A549 (cell line): ENCODE measurements at regions of chr16 and their contacts with region 1.

Region 1: DNA sequence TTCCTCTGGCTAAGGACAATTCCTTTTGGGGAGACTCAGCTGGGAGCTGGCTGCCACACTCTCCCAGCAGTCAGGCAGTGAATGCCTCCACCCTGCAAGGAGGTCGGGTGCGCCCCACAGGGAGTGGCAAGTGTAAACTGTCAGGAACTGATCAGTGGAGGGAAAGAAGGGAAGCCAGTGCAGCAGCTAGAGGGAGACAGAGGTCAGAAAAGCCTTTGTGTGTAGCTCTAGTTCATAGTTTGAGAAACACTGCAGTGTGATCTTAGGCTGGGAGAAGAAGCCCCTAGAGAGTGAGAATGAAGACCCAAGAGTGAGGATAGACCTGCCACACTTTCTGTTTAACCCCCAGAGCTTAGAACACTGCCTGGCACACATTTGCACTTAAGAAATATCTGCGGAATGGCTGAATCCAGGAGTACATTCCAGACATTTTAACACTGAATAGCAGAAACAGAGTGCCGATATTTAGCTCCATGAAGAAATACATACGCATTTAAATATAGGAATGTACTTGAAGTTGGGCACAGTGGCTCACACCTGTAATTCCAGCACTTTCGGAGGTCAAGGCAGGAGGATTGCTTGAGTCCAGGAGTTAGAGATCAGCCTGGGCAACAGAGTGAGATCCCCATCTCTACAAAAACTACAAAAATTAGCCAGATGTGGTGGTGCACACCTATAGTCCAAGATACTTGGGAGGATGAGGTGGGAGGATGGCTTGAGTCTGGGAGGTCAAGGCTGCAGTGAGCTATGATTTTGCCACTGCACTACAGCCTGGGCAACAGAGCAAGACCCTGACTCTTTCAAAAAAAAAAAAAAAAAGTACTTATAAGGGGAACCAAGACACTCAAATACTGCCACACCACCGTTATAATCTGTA is 11.1 kb upstream of the SLC5A11 start:
- DNase-seq: peak; percentile 71 to 76
- ATAC-seq: peak; percentile 87
- H3K4me3 ChIP-seq: no peak overlapping the region
- H3K27ac ChIP-seq: peak overlapping the region; percentile 63 to 74
- H3K4me1 ChIP-seq: peaks cover 31% of the 10 kb centered on the region
- CTCF ChIP-seq: peak; percentile 90
- EP300 ChIP-seq: no peak
- POLR2A ChIP-seq: no peak
- RAD21 ChIP-seq: peak; percentile 92 to 96

Region 2: DNA sequence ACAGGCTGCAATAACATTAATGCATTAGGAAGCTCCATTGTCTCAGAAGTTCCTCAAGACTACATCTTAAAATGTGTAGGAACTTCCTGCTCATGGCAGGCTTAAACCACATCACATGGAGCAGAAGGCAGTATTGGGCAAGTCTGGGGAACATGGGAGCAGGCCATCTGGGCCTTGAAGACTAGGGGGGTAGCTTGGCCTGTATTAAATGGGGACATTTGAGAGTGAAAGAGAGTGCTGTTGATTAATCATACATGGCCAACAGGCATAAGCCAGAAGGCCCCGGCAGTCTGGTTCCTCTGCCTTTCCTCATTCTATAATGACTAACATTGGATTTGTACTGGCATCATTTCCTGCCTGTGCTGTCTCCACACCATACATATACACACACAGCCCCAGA is 14.2 kb before region 1 on chr16:
- CTCF ChIA-PET with region 1: interaction called, 11 read pairs
- POLR2A ChIA-PET with region 1: no interaction called
- DNase-seq: no peak
- ATAC-seq: no peak
- H3K4me3 ChIP-seq: no peak overlapping the region
- H3K27ac ChIP-seq: no peak overlapping the region
- H3K4me1 ChIP-seq: peaks cover 11% of the 10 kb centered on the region; the same call in 2 of the 3 replicates
- CTCF ChIP-seq: no peak
- EP300 ChIP-seq: no peak
- POLR2A ChIP-seq: no peak
- RAD21 ChIP-seq: no peak

Region 3: DNA sequence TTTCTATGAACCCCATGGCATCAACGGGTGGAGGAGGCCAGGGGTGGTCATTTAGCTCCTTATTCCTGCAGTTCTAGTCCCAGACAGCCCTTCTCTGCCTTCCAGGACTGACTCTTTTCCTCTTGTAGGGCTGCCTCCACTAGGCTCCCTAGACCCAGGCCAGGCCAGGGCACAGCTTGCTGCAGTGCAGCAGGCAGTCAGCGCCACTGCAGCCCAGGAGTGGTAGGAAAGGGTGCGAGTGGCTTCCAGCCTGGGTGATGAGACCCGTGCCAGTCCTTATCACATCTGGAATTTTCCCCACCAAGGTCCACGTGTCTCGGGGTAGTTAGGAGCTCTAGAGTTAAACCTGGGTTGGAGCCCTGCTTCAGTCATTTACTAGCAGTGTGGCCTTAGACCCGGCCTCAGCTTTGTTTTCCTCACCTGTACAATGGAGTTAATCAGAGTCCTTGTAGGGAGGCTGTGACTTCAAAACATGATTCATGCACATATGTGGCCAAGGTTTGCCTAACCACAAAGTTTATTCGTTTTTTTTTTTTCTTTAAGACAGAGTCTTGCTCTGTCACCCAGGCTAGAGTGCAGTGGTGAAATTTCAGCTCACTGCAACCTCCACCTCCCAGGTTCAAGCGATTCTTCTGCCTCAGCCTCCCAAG is 15.7 kb after region 1 on chr16:
- CTCF ChIA-PET with region 1: interaction called, 22 read pairs
- POLR2A ChIA-PET with region 1: interaction called, 11 read pairs
- DNase-seq: no peak
- ATAC-seq: peak; percentile 1 to 21; a peak in 1 of 6 replicates
- H3K4me3 ChIP-seq: no peak overlapping the region
- H3K27ac ChIP-seq: peak overlapping the region; percentile 83 to 89
- H3K4me1 ChIP-seq: peaks cover 93% of the 10 kb centered on the region
- CTCF ChIP-seq: no peak
- EP300 ChIP-seq: no peak
- POLR2A ChIP-seq: no peak
- RAD21 ChIP-seq: no peak

Region 4: DNA sequence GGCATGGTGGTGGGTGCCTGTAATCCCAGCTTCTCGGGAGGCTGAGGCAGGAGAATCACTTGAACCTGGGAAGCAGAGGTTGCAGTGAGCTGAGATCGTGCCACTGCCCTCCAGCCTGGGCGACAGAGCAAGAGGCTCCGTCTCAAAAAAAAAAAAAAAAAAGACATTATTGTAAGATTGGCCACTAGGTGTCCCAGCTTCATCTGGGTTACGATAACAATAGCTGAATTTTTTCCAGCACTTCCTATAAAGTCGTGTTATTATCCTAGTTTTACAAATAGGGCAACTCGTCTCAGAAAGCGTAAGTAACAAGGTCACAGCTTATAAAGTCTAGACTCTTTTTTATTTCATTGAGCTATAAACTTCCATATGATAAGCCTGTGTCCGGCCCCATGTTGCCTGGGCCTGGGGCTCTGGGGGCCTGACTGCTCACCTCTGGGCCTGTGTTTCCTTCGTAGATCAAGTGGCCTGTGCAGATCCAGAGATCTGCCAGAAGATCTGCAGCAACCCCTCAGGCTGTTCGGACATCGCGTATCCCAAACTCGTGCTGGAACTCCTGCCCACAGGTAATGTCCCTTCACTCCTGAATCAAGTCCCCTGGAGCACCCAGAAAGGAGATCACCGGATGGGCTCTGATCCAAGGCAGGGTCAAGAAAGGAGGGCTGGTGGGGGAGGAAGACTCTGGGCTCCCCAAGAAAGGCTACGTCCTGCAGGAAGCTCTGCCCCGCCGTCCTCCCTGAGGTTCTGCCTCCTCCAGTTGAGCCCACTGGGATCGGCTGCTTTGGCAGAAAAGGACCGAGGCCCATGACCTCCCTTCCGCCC is 71.7 kb after region 1 on chr16:
- CTCF ChIA-PET with region 1: interaction called, 11 read pairs
- POLR2A ChIA-PET with region 1: no interaction called
- DNase-seq: peak in 1 of 2 experiments; percentile 35
- ATAC-seq: peak in 1 of 2 experiments; percentile 76; a peak in 3 of 6 replicates
- H3K4me3 ChIP-seq: no peak overlapping the region
- H3K27ac ChIP-seq: no peak overlapping the region
- H3K4me1 ChIP-seq: no peaks in the 10 kb centered on the region
- CTCF ChIP-seq: peak; percentile 37; the same call in 2 of the 3 replicates
- EP300 ChIP-seq: no peak
- POLR2A ChIP-seq: no peak
- RAD21 ChIP-seq: peak; percentile 30 to 51; a peak in 3 of 5 replicates

Region 5: DNA sequence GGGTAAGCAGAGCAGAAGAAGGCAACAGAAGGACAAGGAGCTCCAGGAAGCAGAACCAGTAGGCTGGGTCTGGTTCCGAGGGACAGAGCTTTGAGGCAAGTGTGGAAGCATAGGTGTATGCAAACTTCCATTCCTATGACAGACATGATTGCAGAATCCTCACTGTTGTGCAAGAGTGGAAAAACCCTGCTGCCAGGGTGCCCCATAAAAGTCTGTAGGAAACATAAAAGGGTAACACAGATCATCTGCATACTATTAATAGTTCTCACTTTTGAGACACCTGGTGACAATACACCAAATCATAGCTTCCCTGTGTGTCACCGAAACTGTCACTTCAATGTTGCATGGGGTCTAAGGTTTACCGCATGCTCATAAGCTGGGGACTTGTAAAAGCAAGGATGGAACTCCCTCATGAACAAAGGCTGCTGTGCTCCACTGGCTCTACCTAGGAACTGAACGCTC is 140.8 kb after region 1 on chr16:
- CTCF ChIA-PET with region 1: interaction called, 10 read pairs
- POLR2A ChIA-PET with region 1: no interaction called
- DNase-seq: peak in 1 of 2 experiments; percentile 19
- ATAC-seq: peak; percentile 36 to 45; a peak in 3 of 6 replicates
- H3K4me3 ChIP-seq: no peak overlapping the region
- H3K27ac ChIP-seq: peak overlapping the region; percentile 8 to 77; a peak in 3 of 6 replicates
- H3K4me1 ChIP-seq: peaks cover 48% of the 10 kb centered on the region
- CTCF ChIP-seq: no peak
- EP300 ChIP-seq: no peak
- POLR2A ChIP-seq: no peak
- RAD21 ChIP-seq: no peak